Naive thymus-derived CD4-positive, alpha-beta T cell (primary cell): ENCODE measurements at regions of chr20 and their contacts with region 1.

Region 1: GRCh38 chr20:44609511-44610312 is 27.3 kb downstream of the PKIG start:
- DNase-seq: peak; percentile 70 to 82 (median 77)
- ATAC-seq: peak; percentile 91
- H3K4me3 ChIP-seq: peak overlapping the region; percentile 2
- H3K4me3 Mint-ChIP-seq: peak overlapping the region; percentile 30 to 86 (median 74)
- H3K27ac ChIP-seq: peak overlapping the region; percentile 73
- H3K27ac Mint-ChIP-seq: peak overlapping the region; percentile 88 to 100 (median 98)
- H3K4me1 ChIP-seq: peaks cover 8 to 24% of the 10 kb centered on the region in 2 donors
- H3K4me1 Mint-ChIP-seq: peaks cover 14 to 39% (median 25%) of the 10 kb centered on the region in 7 donors
- H3K27me3 ChIP-seq: no peaks in the 10 kb centered on the region
- H3K27me3 Mint-ChIP-seq: no peaks in the 10 kb centered on the region

Region 2: GRCh38 chr20:43893930-43894329 is 715.8 kb before region 1 on chr20:
- CTCF ChIA-PET with region 1: no interaction called
- POLR2A ChIA-PET with region 1: no interaction called
- intact Hi-C with region 1: no loop called
- DNase-seq: no peak
- ATAC-seq: no peak
- H3K4me3 ChIP-seq: no peak overlapping the region
- H3K4me3 Mint-ChIP-seq: no peak overlapping the region
- H3K27ac ChIP-seq: no peak overlapping the region
- H3K27ac Mint-ChIP-seq: no peak overlapping the region
- H3K4me1 ChIP-seq: no peaks in the 10 kb centered on the region
- H3K4me1 Mint-ChIP-seq: no peaks in the 10 kb centered on the region
- H3K27me3 ChIP-seq: no peaks in the 10 kb centered on the region
- H3K27me3 Mint-ChIP-seq: peaks cover 4 to 47% (median 10%) of the 10 kb centered on the region in 5 donors

Region 3: GRCh38 chr20:44217342-44218092 is 392.2 kb before region 1 on chr20:
- CTCF ChIA-PET with region 1: interaction called, 17 read pairs
- POLR2A ChIA-PET with region 1: interaction called, 5 read pairs
- intact Hi-C with region 1: loop called (anchors 1 kb)
- DNase-seq: peak; percentile 41 to 80 (median 68)
- ATAC-seq: peak; percentile 68
- H3K4me3 ChIP-seq: peak overlapping the region; percentile 57
- H3K4me3 Mint-ChIP-seq: peak overlapping the region; percentile 76 to 90 (median 86)
- H3K27ac ChIP-seq: peak overlapping the region; percentile 75
- H3K27ac Mint-ChIP-seq: peak overlapping the region; percentile 81 to 99 (median 94)
- H3K4me1 ChIP-seq: peaks cover 29 to 33% of the 10 kb centered on the region in 2 donors
- H3K4me1 Mint-ChIP-seq: peaks cover 40 to 85% (median 72%) of the 10 kb centered on the region in 7 donors
- H3K27me3 ChIP-seq: no peaks in the 10 kb centered on the region
- H3K27me3 Mint-ChIP-seq: no peaks in the 10 kb centered on the region

Region 4: DNA sequence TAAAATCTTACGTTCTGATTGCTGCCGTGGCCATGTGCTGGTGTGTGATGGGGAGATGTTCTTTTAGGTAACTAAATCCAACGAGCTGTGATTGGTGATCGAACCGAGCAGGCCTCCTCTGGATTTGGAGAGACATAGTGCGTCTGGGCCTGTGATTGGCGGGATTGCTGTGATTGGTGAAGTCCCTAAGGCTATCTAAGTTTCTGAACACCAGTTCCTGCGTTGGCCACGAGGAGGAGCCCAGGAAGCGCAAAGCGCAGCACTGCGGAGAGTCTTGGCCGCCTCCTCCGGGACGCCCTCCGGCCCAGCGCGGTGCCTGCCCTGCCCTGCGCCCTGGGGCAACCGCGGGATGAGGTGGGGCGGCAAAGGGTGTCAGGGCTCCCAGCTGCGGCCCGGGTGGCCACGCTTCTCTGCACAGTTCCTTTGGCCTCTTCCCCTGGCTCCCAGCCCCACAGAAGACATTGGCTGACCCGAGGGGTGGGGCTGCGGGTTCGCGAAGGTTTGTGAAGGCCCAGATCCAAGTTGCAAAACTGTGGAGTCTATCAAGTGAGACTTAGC is 221.2 kb before region 1 on chr20:
- CTCF ChIA-PET with region 1: interaction called, 22 read pairs
- POLR2A ChIA-PET with region 1: no interaction called
- intact Hi-C with region 1: loop called (anchors 1 kb)
- DNase-seq: peak; percentile 30 to 70 (median 50)
- ATAC-seq: peak; percentile 91
- H3K4me3 ChIP-seq: no peak overlapping the region
- H3K4me3 Mint-ChIP-seq: peak overlapping the region in 4 of 10 donors; percentile 14 to 69 (median 38)
- H3K27ac ChIP-seq: no peak overlapping the region
- H3K27ac Mint-ChIP-seq: peak overlapping the region in 1 of 9 donors; percentile 41
- H3K4me1 ChIP-seq: no peaks in the 10 kb centered on the region
- H3K4me1 Mint-ChIP-seq: peaks cover 4 to 16% (median 8%) of the 10 kb centered on the region in 7 donors
- H3K27me3 ChIP-seq: no peaks in the 10 kb centered on the region
- H3K27me3 Mint-ChIP-seq: peaks cover 9 to 20% (median 10%) of the 10 kb centered on the region in 5 donors

Region 5: GRCh38 chr20:44532259-44532980 is 77.3 kb before region 1 on chr20:
- CTCF ChIA-PET with region 1: interaction called, 3 read pairs
- POLR2A ChIA-PET with region 1: no interaction called
- intact Hi-C with region 1: loop called (anchors 1 kb)
- DNase-seq: peak in 2 of 9 donors; percentile 15 to 20
- ATAC-seq: peak; percentile 6
- H3K4me3 ChIP-seq: peak overlapping the region; percentile 83
- H3K4me3 Mint-ChIP-seq: no peak overlapping the region
- H3K27ac ChIP-seq: peak overlapping the region; percentile 71
- H3K27ac Mint-ChIP-seq: no peak overlapping the region
- H3K4me1 ChIP-seq: peaks cover 5 to 19% of the 10 kb centered on the region in 2 donors
- H3K4me1 Mint-ChIP-seq: peaks cover 0 to 8% (median 4%) of the 10 kb centered on the region in 7 donors
- H3K27me3 ChIP-seq: no peaks in the 10 kb centered on the region
- H3K27me3 Mint-ChIP-seq: peaks cover 0 to 11% (median 0%) of the 10 kb centered on the region in 5 donors

Region 6: GRCh38 chr20:44598423-44599305 is 11.0 kb before region 1 on chr20:
- CTCF ChIA-PET with region 1: interaction called, 23 read pairs
- POLR2A ChIA-PET with region 1: interaction called, 3 read pairs
- intact Hi-C with region 1: no loop called
- DNase-seq: no peak
- ATAC-seq: peak; percentile 70
- H3K4me3 ChIP-seq: no peak overlapping the region
- H3K4me3 Mint-ChIP-seq: peak overlapping the region; percentile 52 to 80 (median 74)
- H3K27ac ChIP-seq: peak overlapping the region; percentile 44
- H3K27ac Mint-ChIP-seq: peak overlapping the region; percentile 82 to 96 (median 88)
- H3K4me1 ChIP-seq: peaks cover 0 to 12% of the 10 kb centered on the region in 2 donors
- H3K4me1 Mint-ChIP-seq: peaks cover 10 to 40% (median 29%) of the 10 kb centered on the region in 7 donors
- H3K27me3 ChIP-seq: no peaks in the 10 kb centered on the region
- H3K27me3 Mint-ChIP-seq: no peaks in the 10 kb centered on the region

Region 7: DNA sequence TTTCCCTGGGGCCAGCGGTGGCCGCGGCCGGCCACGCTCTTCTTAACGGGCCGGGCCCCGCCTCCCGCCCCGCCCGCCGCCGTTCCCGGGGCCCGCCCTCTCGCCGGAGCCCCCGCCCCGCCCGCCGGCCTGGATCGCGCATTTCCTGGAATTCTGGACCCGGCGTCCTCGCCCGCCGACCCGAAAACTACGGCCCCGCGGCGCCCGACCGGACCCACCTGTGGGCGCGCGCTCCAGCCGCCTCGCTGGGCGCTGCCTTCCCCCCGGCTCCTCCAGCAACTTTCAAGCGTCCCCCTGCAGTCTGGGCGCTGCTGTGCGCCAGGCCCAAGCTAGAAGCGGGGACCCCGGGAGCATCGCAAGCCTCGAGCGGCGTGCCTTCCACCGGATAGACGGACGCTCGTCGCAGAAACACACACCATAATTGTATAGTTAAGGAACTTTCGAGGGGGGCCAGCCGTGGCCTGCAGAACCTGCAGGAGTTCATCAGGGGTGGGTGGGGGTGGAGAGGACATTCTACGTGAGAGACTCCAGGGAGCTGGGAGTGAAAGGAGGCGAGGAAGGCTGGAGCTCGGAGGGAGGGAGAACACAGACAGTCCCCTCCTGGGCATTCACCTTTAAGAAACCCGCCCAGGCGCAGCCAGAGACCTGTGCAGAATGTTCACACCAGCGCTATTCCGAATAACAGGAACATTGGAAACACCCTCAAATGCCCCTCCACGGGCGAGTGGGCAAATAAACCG is 42.1 kb after region 1 on chr20 and contains the start of gene ADA:
- CTCF ChIA-PET with region 1: interaction called, 8 read pairs
- POLR2A ChIA-PET with region 1: interaction called, 122 read pairs
- intact Hi-C with region 1: loop called in 1 of 2 experiments (anchors 5 kb)
- DNase-seq: peak; percentile 26 to 70 (median 48)
- ATAC-seq: peak; percentile 70
- H3K4me3 ChIP-seq: peak within 1 kb of the TSS; percentile 73
- H3K4me3 Mint-ChIP-seq: peak within 1 kb of the TSS; percentile 81 to 96 (median 94)
- H3K27ac ChIP-seq: peak within 1 kb of the TSS; percentile 73
- H3K27ac Mint-ChIP-seq: peak within 1 kb of the TSS; percentile 88 to 98 (median 95)
- H3K4me1 ChIP-seq: peaks cover 38 to 43% of the 10 kb centered on the region in 2 donors
- H3K4me1 Mint-ChIP-seq: peaks cover 40 to 57% (median 55%) of the 10 kb centered on the region in 7 donors
- H3K27me3 ChIP-seq: no peaks in the 10 kb centered on the region
- H3K27me3 Mint-ChIP-seq: no peaks in the 10 kb centered on the region
- total RNA-seq, gene ADA: 26.1 to 103 (median 28.2) TPM

Region 8: GRCh38 chr20:44706301-44707017 is 96.7 kb after region 1 on chr20:
- CTCF ChIA-PET with region 1: no interaction called
- POLR2A ChIA-PET with region 1: no interaction called
- intact Hi-C with region 1: no loop called
- DNase-seq: no peak
- ATAC-seq: no peak
- H3K4me3 ChIP-seq: no peak overlapping the region
- H3K4me3 Mint-ChIP-seq: no peak overlapping the region
- H3K27ac ChIP-seq: no peak overlapping the region
- H3K27ac Mint-ChIP-seq: no peak overlapping the region
- H3K4me1 ChIP-seq: no peaks in the 10 kb centered on the region
- H3K4me1 Mint-ChIP-seq: no peaks in the 10 kb centered on the region
- H3K27me3 ChIP-seq: peaks cover 0 to 3% of the 10 kb centered on the region in 2 donors
- H3K27me3 Mint-ChIP-seq: peaks cover 0 to 2% (median 0%) of the 10 kb centered on the region in 5 donors

Region 9: GRCh38 chr20:44733341-44734069 is 123.8 kb after region 1 on chr20:
- CTCF ChIA-PET with region 1: interaction called, 4 read pairs
- POLR2A ChIA-PET with region 1: interaction called, 4 read pairs
- intact Hi-C with region 1: loop called (anchors 1 to 10 kb)
- DNase-seq: peak; percentile 34 to 73 (median 57)
- ATAC-seq: peak; percentile 77
- H3K4me3 ChIP-seq: no peak overlapping the region
- H3K4me3 Mint-ChIP-seq: no peak overlapping the region
- H3K27ac ChIP-seq: no peak overlapping the region
- H3K27ac Mint-ChIP-seq: peak overlapping the region in 1 of 9 donors; percentile 32
- H3K4me1 ChIP-seq: no peaks in the 10 kb centered on the region
- H3K4me1 Mint-ChIP-seq: peaks cover 11 to 23% (median 20%) of the 10 kb centered on the region in 7 donors
- H3K27me3 ChIP-seq: no peaks in the 10 kb centered on the region
- H3K27me3 Mint-ChIP-seq: no peaks in the 10 kb centered on the region

Region 10: GRCh38 chr20:44960103-44960852 is 350.6 kb after region 1 on chr20 and contains the start of gene TOMM34:
- CTCF ChIA-PET with region 1: no interaction called
- POLR2A ChIA-PET with region 1: no interaction called
- intact Hi-C with region 1: no loop called
- DNase-seq: peak; percentile 87 to 98 (median 91)
- ATAC-seq: peak; percentile 97
- H3K4me3 ChIP-seq: peak within 1 kb of the TSS; percentile 71
- H3K4me3 Mint-ChIP-seq: peak within 1 kb of the TSS; percentile 84 to 100 (median 96)
- H3K27ac ChIP-seq: peak within 1 kb of the TSS; percentile 75
- H3K27ac Mint-ChIP-seq: peak within 1 kb of the TSS; percentile 79 to 98 (median 93)
- H3K4me1 ChIP-seq: peaks cover 22 to 24% of the 10 kb centered on the region in 2 donors
- H3K4me1 Mint-ChIP-seq: peaks cover 26 to 71% (median 58%) of the 10 kb centered on the region in 7 donors
- H3K27me3 ChIP-seq: no peaks in the 10 kb centered on the region
- H3K27me3 Mint-ChIP-seq: no peaks in the 10 kb centered on the region
- total RNA-seq, gene TOMM34: 7.0 to 22.5 (median 8.6) TPM